Cardiac septum (tissue), 1 donor: ENCODE measurements at regions of chr10 and their contacts with region 1.

Region 1: GRCh38 chr10:132939957-132940790 is 2.2 kb downstream of the CFAP46 start:
- DNase-seq: no peak

Region 2: DNA sequence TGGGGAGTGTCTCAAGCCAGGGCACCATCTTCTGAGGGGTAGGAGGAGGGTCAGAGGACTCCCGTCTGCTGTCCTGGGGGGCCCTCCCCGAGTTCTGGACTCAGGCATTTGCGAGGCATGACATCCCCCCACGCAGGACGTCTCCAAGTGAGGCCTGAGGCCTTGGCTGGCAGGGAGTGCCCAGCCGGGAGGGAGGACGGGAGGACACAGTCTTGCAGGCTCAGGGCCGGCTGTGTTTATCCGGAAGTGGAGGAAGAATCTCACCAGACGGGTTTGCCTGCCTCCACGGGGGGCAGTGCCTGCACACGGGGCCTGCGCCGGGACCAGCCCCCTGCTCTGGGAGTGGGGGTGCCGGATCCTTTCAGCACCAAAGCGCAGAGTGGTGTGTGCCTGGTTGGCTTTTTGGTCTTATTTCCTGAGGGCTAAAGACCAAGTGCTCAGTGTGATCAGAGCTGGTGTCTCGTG is 532.3 kb before region 1 on chr10:
- intact Hi-C with region 1: no loop called
- DNase-seq: no peak

Region 3: GRCh38 chr10:132929953-132930548 is 10.1 kb before region 1 on chr10:
- intact Hi-C with region 1: no loop called
- DNase-seq: no peak

Region 4: GRCh38 chr10:133124357-133125211 is 184.4 kb after region 1 on chr10:
- intact Hi-C with region 1: loop called (anchors 2 kb)
- DNase-seq: peak; percentile 76